ENCODE measurements at regions of chr20 and their contacts with region 1.

Region 1: DNA sequence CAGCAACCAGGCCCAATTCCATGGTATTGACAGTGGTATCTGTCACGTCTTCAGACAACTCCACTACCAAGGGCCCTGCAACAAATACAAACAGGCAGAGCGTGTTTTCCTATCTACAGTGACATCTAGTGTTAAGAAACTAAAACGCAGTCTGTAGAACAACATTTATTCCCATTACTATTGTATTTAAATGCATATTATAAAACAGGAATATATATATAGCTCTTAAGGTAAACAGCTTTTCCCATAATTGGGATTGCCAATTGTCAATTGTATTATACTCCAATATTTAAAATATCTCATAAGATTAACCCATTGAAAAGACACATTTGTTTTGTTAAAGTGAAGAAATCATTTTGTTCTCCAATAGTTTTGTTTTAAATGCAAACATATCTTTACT is 97.2 kb downstream of the KIF16B start:
- DNase-seq: no peak
- H3K4me3 ChIP-seq: no peak overlapping the region
- H3K27ac ChIP-seq: no peak overlapping the region
- H3K4me1 ChIP-seq: peaks cover 0 to 5% of the 10 kb centered on the region in 2 donors
- H3K27me3 ChIP-seq: no peaks in the 10 kb centered on the region
- CTCF ChIP-seq: peak; percentile 25 to 73 (median 51)

Region 2: GRCh38 chr20:16368645-16369292 is 107.3 kb before region 1 on chr20:
- intact Hi-C with region 1: loop called (anchors 10 kb)
- DNase-seq: no peak
- H3K4me3 ChIP-seq: no peak overlapping the region
- H3K27ac ChIP-seq: peak overlapping the region; percentile 17 to 71
- H3K4me1 ChIP-seq: peaks cover 6% of the 10 kb centered on the region in 2 donors
- H3K27me3 ChIP-seq: no peaks in the 10 kb centered on the region
- CTCF ChIP-seq: no peak